OCI-LY7 (cell line): ENCODE measurements at regions of chr11 and their contacts with region 1.

Region 1: DNA sequence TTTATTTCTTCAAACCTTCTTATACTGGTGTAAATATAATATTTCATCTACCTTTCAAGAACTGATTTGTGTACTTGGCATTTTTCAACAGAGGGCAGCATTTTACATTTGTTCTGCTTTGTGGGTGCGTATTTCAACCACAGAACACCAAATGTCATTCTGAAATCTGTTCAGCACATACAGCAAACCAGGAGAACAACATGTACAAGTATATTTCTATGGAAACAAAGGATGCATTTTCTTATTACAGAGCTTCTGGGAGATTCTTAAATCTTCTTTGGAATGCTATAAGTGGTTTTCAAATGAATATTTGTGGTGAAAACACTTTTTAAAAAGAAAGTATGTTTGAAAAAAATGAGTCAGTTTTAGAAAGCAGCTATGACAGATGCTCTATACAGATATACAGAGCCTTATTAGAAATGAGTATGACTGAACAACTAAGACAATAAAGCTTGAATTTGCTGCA is 946.0 kb downstream of the FAM181B start:
- DNase-seq: peak; percentile 49
- H3K4me3 ChIP-seq: no peak overlapping the region
- H3K27ac ChIP-seq: no peak overlapping the region
- H3K4me1 ChIP-seq: no peaks in the 10 kb centered on the region
- CTCF ChIP-seq: peak; percentile 76

Region 2: DNA sequence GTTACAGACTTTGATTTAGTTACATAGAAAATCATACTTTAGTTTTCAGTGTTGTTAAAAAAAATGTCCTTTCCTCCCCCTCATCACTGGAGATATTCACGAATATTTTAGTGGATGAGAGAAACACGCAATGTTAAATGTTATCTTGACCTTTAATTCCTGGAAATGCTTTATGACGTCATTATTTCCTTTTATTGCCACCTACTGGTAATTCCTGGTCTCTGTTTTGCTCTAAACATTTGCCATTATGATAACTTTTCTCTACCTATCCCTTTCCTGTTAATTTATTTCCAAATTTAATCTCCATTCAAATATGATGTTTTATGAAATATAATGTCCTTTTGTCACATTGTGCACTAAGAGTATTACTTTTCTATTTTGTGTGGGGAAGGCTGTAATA is 175.4 kb after region 1 on chr11:
- CTCF ChIA-PET with region 1: no interaction called
- POLR2A ChIA-PET with region 1: no interaction called
- intact Hi-C with region 1: loop called (anchors 5 kb)
- DNase-seq: peak; percentile 30
- H3K4me3 ChIP-seq: no peak overlapping the region
- H3K27ac ChIP-seq: no peak overlapping the region
- H3K4me1 ChIP-seq: no peaks in the 10 kb centered on the region
- CTCF ChIP-seq: peak; percentile 77

Region 3: GRCh38 chr11:82038153-82038552 is 250.5 kb after region 1 on chr11:
- CTCF ChIA-PET with region 1: interaction called, 4 read pairs
- POLR2A ChIA-PET with region 1: no interaction called
- intact Hi-C with region 1: loop called (anchors 10 kb)
- DNase-seq: peak; percentile 1
- H3K4me3 ChIP-seq: no peak overlapping the region
- H3K27ac ChIP-seq: no peak overlapping the region
- H3K4me1 ChIP-seq: no peaks in the 10 kb centered on the region
- CTCF ChIP-seq: peak; percentile 56

Region 4: GRCh38 chr11:82229341-82229740 is 441.7 kb after region 1 on chr11:
- CTCF ChIA-PET with region 1: no interaction called
- POLR2A ChIA-PET with region 1: no interaction called
- intact Hi-C with region 1: loop called (anchors 10 kb)
- DNase-seq: peak; percentile 37
- H3K4me3 ChIP-seq: no peak overlapping the region
- H3K27ac ChIP-seq: no peak overlapping the region
- H3K4me1 ChIP-seq: no peaks in the 10 kb centered on the region
- CTCF ChIP-seq: peak; percentile 79